CD8-positive, alpha-beta T cell (primary cell): ENCODE measurements at regions of chr2 and their contacts with region 1.

Region 1: GRCh38 chr2:237421542-237422116 is 7.7 kb upstream of the COL6A3 start:
- DNase-seq: peak; percentile 56 to 91 (median 83)
- ATAC-seq: peak; percentile 88
- H3K4me3 ChIP-seq: peak overlapping the region in 1 of 2 experiments; percentile 21
- H3K4me3 Mint-ChIP-seq: peak overlapping the region; percentile 70
- H3K27ac ChIP-seq: no peak overlapping the region
- H3K27ac Mint-ChIP-seq: no peak overlapping the region
- H3K4me1 ChIP-seq: peaks cover 10% of the 10 kb centered on the region
- H3K4me1 Mint-ChIP-seq: peaks cover 34% of the 10 kb centered on the region
- H3K27me3 ChIP-seq: no peaks in the 10 kb centered on the region
- H3K27me3 Mint-ChIP-seq: no peaks in the 10 kb centered on the region
- CTCF ChIP-seq: peak; percentile 86

Region 2: GRCh38 chr2:237154082-237154638 is 267.5 kb before region 1 on chr2:
- CTCF ChIA-PET with region 1: interaction called, 21 read pairs
- POLR2A ChIA-PET with region 1: interaction called, 3 read pairs
- intact Hi-C with region 1: loop called (anchors 1 kb)
- DNase-seq: peak in 8 of 9 experiments; percentile 34 to 75 (median 54)
- ATAC-seq: peak; percentile 81
- H3K4me3 ChIP-seq: no peak overlapping the region
- H3K4me3 Mint-ChIP-seq: no peak overlapping the region
- H3K27ac ChIP-seq: no peak overlapping the region
- H3K27ac Mint-ChIP-seq: no peak overlapping the region
- H3K4me1 ChIP-seq: peaks cover 14% of the 10 kb centered on the region
- H3K4me1 Mint-ChIP-seq: peaks cover 20% of the 10 kb centered on the region
- H3K27me3 ChIP-seq: no peaks in the 10 kb centered on the region
- H3K27me3 Mint-ChIP-seq: no peaks in the 10 kb centered on the region
- CTCF ChIP-seq: peak; percentile 59

Region 3: GRCh38 chr2:237434866-237435311 is 13.3 kb after region 1 on chr2:
- CTCF ChIA-PET with region 1: interaction called, 136 read pairs
- POLR2A ChIA-PET with region 1: interaction called, 19 read pairs
- intact Hi-C with region 1: loop called in 1 of 2 experiments (anchors 1 kb)
- DNase-seq: peak; percentile 26 to 87 (median 78)
- ATAC-seq: peak; percentile 54
- H3K4me3 ChIP-seq: peak overlapping the region; percentile 22 to 56
- H3K4me3 Mint-ChIP-seq: peak overlapping the region; percentile 79
- H3K27ac ChIP-seq: peak overlapping the region; percentile 0 to 44
- H3K27ac Mint-ChIP-seq: peak overlapping the region; percentile 96
- H3K4me1 ChIP-seq: peaks cover 90% of the 10 kb centered on the region
- H3K4me1 Mint-ChIP-seq: peaks cover 86% of the 10 kb centered on the region
- H3K27me3 ChIP-seq: no peaks in the 10 kb centered on the region
- H3K27me3 Mint-ChIP-seq: no peaks in the 10 kb centered on the region
- CTCF ChIP-seq: no peak

Region 4: DNA sequence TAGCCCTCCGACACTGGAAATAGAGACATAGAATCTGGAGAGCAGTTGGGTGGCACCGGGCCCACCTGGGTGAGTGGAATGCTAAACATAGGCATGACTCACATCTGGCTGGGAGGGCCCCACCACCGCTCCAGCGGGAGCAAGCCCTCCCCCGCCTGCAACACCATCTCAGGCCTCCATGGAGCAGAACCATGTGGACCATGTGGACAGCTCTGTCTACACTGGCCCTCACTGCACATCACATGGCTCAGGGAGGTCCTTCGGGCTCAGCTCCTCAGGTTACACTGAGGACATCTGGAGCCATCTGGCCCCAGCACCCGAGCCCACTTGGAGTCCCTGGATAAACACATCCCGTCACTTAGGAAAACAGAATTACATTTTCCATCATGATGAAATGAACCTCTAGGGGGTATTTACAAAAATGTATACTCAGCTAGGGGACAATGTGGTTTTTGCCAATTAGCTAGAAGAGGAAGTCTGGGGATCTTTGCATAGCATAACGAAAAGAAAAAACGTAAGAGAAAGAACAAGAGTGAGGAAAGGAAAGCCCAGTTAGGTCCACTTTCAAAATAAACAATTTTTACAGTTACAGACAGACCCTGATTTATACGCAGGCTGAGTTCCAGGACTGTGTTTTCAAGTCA is 34.7 kb after region 1 on chr2:
- CTCF ChIA-PET with region 1: interaction called, 46 read pairs
- POLR2A ChIA-PET with region 1: interaction called, 3 read pairs
- intact Hi-C with region 1: no loop called
- DNase-seq: no peak
- ATAC-seq: no peak
- H3K4me3 ChIP-seq: no peak overlapping the region
- H3K4me3 Mint-ChIP-seq: no peak overlapping the region
- H3K27ac ChIP-seq: no peak overlapping the region
- H3K27ac Mint-ChIP-seq: no peak overlapping the region
- H3K4me1 ChIP-seq: no peaks in the 10 kb centered on the region
- H3K4me1 Mint-ChIP-seq: peaks cover 10% of the 10 kb centered on the region
- H3K27me3 ChIP-seq: no peaks in the 10 kb centered on the region
- H3K27me3 Mint-ChIP-seq: no peaks in the 10 kb centered on the region
- CTCF ChIP-seq: no peak

Region 5: DNA sequence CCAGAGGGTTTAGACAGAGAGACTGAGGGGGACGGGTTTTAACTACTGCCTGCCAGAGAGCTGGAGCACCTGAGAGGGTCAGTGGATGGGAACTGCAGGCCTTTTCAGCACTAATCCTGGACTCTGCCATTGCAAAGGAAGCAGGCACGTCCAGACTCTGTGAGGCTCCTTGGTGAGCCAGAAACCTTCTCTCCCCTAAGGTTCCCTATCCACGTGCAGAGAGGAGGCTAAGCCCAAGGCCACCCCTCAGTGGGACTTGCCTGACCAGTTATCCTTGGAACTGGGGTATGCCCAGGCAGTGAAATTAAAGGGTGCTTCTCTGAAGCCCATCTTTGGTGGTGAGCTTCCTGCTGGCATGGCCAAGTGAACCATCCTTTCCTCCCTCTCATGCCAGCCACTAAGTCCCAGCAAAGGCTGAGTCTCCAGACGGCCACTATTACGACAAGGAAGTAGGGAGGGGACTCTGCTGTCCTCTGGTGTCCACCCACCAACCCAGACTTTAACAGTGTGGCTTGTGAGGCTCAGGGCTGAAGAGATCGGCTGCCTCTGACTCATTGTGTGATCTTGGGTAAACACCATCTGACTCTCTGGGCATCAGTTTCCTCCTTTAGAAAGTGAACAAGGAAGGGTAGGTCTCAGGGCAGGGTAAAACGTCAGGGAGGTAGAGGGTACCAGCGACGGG is 61.6 kb after region 1 on chr2:
- CTCF ChIA-PET with region 1: interaction called, 230 read pairs
- POLR2A ChIA-PET with region 1: no interaction called
- intact Hi-C with region 1: no loop called
- DNase-seq: no peak
- ATAC-seq: no peak
- H3K4me3 ChIP-seq: no peak overlapping the region
- H3K4me3 Mint-ChIP-seq: no peak overlapping the region
- H3K27ac ChIP-seq: no peak overlapping the region
- H3K27ac Mint-ChIP-seq: no peak overlapping the region
- H3K4me1 ChIP-seq: no peaks in the 10 kb centered on the region
- H3K4me1 Mint-ChIP-seq: peaks cover 2% of the 10 kb centered on the region
- H3K27me3 ChIP-seq: no peaks in the 10 kb centered on the region
- H3K27me3 Mint-ChIP-seq: peaks cover 39% of the 10 kb centered on the region
- CTCF ChIP-seq: no peak

Region 6: DNA sequence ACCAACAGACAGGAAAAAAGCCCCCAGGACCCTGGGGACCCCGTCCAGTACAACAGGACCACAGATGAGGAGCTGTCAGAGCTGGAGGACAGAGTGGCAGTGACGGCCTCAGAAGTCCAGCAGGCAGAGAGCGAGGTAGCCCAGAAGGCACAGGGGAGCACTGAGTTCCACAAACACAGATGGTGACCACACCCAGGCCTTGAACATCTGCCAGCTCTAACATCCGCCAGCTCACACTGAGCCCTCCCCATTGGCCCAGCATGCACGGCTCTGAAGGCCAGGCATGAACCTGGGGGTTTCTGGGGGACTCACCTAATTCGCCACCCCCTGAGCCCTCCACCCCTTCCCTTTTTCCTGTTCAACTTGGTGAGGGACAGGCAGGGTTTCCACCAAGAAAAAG is 119.2 kb after region 1 on chr2:
- CTCF ChIA-PET with region 1: no interaction called
- POLR2A ChIA-PET with region 1: no interaction called
- intact Hi-C with region 1: no loop called
- DNase-seq: no peak
- ATAC-seq: no peak
- H3K4me3 ChIP-seq: no peak overlapping the region
- H3K4me3 Mint-ChIP-seq: no peak overlapping the region
- H3K27ac ChIP-seq: no peak overlapping the region
- H3K27ac Mint-ChIP-seq: no peak overlapping the region
- H3K4me1 ChIP-seq: no peaks in the 10 kb centered on the region
- H3K4me1 Mint-ChIP-seq: no peaks in the 10 kb centered on the region
- H3K27me3 ChIP-seq: no peaks in the 10 kb centered on the region
- H3K27me3 Mint-ChIP-seq: peaks cover 9% of the 10 kb centered on the region
- CTCF ChIP-seq: no peak

Region 7: DNA sequence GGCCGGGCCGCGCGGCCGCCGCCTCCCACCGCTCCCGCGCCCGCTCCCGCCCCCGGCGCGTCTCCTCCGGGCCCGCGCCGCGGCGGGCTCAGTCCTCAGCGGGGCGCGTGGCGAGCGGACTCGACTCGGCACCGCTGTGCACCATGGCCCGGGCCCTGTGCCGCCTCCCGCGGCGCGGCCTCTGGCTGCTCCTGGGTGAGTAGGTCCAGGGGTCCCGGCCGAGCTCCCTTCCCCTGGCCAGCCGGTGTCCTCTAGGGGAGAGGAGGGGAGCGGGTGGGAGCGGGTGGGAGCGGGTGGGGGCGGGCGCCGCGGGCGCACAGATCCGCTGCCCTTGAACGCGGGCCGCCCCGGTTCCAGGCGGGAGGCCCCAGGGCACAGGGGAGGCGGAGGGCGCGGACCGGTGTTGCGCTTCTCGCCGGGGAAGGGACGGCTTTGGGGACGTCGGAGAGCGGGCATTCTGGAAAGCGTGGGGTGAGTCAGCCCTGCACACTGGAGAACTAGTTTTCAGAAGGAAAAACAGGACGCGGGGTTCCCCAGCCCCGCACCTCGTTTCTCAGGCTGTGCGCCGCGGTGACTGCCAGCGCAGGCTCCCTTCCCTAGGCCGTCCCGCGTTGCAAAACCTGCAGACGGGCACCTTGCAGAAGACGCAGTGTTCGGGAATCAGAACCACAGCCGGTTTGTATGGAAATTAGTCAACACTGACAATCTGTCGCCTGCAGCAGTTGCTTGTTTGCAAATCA is 438.1 kb after region 1 on chr2 and contains the start of gene RAMP1:
- CTCF ChIA-PET with region 1: no interaction called
- POLR2A ChIA-PET with region 1: no interaction called
- intact Hi-C with region 1: no loop called
- DNase-seq: no peak
- ATAC-seq: no peak
- H3K4me3 ChIP-seq: no peak within 1 kb of the TSS
- H3K4me3 Mint-ChIP-seq: peak within 1 kb of the TSS; percentile 43
- H3K27ac ChIP-seq: no peak within 1 kb of the TSS
- H3K27ac Mint-ChIP-seq: no peak within 1 kb of the TSS
- H3K4me1 ChIP-seq: no peaks in the 10 kb centered on the region
- H3K4me1 Mint-ChIP-seq: peaks cover 12% of the 10 kb centered on the region
- H3K27me3 ChIP-seq: peaks cover 0 to 2% of the 10 kb centered on the region in 2 experiments
- H3K27me3 Mint-ChIP-seq: peaks cover 46% of the 10 kb centered on the region
- CTCF ChIP-seq: no peak
- total RNA-seq, gene RAMP1: not detected